Activated T-helper 2 cell treated with anti-CD3 and anti-CD28 coated beads, Interferon-gamma antibody, Interleukin-2, Interleukin-4, amounts not matched to agents 10 μg/mL and 5 μg/mL and 100 μg/mL, durations not matched to agents 14 hours and 24 hours and 36 hours (primary cell): ENCODE measurements at regions of chr19 and their contacts with region 1.

Region 1: DNA sequence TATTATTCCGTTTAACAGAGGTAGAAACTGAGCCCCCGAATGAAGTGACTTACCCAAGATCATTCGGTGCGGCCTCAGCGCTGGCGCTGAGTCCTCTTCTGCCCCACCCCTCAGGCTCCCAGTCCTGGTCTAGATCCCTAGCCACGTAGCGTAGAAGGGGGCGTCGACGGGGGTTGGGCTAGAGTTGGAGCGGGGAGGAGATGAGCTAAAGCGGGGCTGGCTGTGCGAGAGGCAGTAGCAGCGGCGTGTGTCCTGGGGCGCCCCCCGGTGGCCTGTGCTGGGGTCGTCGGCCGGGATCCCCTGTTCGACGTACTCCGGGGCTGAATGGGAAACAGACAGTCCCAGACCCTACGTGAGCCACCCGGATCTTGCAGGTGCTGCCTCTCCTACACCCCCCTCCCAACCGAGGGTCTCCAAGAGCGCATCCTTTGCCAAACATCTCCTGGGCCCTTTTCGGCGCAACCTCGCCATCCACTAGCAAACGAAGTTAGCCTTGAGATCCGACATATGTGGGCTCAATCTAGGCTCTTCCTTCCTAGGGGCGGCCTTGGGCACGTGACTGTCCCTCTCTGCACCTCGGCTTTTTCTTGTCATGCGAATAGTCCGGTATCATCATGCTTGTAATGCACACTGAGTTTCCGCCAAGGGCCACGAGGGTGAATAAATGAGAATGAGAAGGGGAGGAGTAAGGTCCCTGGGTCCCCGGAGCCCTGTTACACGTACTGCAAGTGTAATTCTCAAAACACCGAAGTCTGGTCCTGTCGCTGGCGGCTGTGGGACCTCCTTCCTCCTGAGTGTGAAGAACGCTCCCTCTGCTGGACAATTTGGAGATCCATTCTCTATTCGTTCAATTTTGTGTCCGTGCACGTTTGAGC is 47.7 kb downstream of the CYP4F22 start:
- DNase-seq: peak; percentile 92
- H3K4me3 Mint-ChIP-seq: peak overlapping the region; percentile 82
- H3K27ac Mint-ChIP-seq: peak overlapping the region; percentile 70
- H3K4me1 Mint-ChIP-seq: peaks cover 16% of the 10 kb centered on the region
- H3K27me3 Mint-ChIP-seq: peaks cover 5% of the 10 kb centered on the region

Region 2: GRCh38 chr19:15177269-15178116 is 378.5 kb before region 1 on chr19:
- intact Hi-C with region 1: loop called (anchors 1 kb)
- DNase-seq: peak; percentile 73
- H3K4me3 Mint-ChIP-seq: peak overlapping the region; percentile 2
- H3K27ac Mint-ChIP-seq: no peak overlapping the region
- H3K4me1 Mint-ChIP-seq: peaks cover 4% of the 10 kb centered on the region
- H3K27me3 Mint-ChIP-seq: peaks cover 8% of the 10 kb centered on the region

Region 3: GRCh38 chr19:15379083-15379995 is 176.7 kb before region 1 on chr19 and contains the start of gene AKAP8:
- intact Hi-C with region 1: loop called (anchors 2 kb)
- DNase-seq: peak; percentile 98
- H3K4me3 Mint-ChIP-seq: peak within 1 kb of the TSS; percentile 98
- H3K27ac Mint-ChIP-seq: peak within 1 kb of the TSS; percentile 100
- H3K4me1 Mint-ChIP-seq: peaks cover 30% of the 10 kb centered on the region
- H3K27me3 Mint-ChIP-seq: no peaks in the 10 kb centered on the region
- total RNA-seq, gene AKAP8: 56.0 and 62.1 TPM in 2 replicates

Region 4: DNA sequence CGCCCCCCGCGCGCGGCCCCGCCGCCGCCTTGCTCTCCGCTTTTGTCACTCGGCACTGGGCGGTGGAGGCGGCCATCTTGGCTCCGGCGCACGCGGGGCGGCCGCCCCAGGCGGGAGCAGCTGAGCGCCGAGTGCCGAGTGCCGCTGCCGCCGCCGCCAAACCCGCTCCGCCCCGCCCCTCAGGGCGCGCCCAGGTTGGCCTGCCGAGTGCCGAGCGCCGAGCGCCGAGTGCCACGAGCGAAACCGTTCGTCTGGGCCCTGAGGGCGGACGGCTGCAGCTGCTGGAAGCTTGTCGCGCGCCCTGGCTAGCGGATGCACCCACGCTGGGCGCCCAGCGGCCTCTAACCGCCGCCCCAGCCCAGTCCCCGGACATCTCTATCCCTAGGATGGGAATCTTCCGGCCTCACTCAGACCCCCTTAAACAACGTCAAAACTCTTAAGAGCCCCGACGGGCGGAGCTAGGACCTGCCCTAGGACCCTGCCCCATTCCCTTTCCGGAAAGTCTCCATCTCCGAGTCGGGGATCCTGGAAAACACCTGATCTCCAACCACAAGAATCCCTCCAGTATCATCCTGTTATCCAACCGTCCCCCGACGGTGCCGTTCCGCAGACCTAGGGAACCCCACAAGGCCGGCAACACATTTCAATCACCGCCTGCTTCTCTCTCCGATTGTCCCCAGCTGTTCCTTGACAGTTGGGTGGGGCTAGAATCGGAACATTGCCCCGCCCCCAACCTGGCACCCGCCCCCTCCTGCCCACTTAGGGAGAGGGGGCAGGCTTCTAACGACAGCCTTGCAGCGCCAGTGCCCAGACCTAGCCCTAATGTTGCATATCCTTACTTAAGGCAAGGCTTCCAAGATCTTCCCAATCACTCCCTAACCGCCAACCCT is 123.1 kb before region 1 on chr19:
- intact Hi-C with region 1: loop called (anchors 1 kb)
- DNase-seq: peak; percentile 94
- H3K4me3 Mint-ChIP-seq: peak overlapping the region; percentile 97
- H3K27ac Mint-ChIP-seq: peak overlapping the region; percentile 93
- H3K4me1 Mint-ChIP-seq: peaks cover 21% of the 10 kb centered on the region
- H3K27me3 Mint-ChIP-seq: no peaks in the 10 kb centered on the region

Region 5: GRCh38 chr19:15511671-15512424 is 44.1 kb before region 1 on chr19:
- intact Hi-C with region 1: loop called (anchors 5 kb)
- DNase-seq: no peak
- H3K4me3 Mint-ChIP-seq: no peak overlapping the region
- H3K27ac Mint-ChIP-seq: no peak overlapping the region
- H3K4me1 Mint-ChIP-seq: peaks cover 22% of the 10 kb centered on the region
- H3K27me3 Mint-ChIP-seq: peaks cover 30% of the 10 kb centered on the region